ENCODE measurements at regions of chr19 and their contacts with region 1.

Region 1: GRCh38 chr19:10228920-10229319 is 2.2 kb downstream of the S1PR2 start:
- DNase-seq: peak in 1 of 5 donors; percentile 39
- H3K4me3 ChIP-seq: no peak overlapping the region
- H3K27ac ChIP-seq: peak overlapping the region in 1 of 2 donors; percentile 55
- H3K4me1 ChIP-seq: peaks cover 10% of the 10 kb centered on the region
- H3K27me3 ChIP-seq: no peaks in the 10 kb centered on the region
- CTCF ChIP-seq: peak in 2 of 3 donors; percentile 20 to 23
- EP300 ChIP-seq: no peak
- POLR2A ChIP-seq: no peak

Region 2: DNA sequence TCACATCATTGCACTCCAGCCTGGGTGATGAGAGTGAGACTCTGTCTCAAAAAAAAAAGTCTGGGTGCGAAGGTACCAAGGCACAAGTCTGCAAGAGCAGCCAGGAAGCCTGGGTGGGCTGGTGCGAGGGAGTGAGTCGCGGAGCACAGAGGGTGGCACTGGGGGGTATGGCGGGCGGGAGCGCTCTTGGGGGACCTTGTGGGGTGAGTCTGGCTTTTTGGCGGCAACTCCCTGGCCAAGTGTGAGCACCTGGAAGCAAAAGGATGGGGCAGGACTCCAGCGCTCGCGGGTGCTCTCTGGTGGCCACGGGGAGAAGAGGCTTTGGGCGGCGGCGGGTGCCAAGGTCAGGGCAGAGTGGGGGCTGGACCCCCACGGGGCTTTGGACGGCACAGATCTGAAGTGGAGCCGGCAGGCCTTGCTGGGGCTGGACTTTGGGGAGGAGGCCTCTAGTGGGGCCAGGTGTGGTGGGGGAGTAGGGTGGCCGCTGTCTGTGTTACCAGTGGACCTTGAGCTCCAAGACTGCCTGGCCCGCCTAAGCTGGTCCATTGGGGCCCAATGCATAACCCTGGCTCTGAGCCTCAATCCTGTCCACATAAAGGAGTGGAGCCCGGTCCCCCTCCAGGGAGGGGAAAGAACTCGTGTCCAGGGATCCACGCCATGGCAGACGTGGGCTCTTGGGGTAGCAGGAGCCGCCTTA is 115.9 kb before region 1 on chr19:
- intact Hi-C with region 1: loop called in 1 of 4 experiments (anchors 10 kb)
- DNase-seq: peak in 3 of 5 donors; percentile 39 to 79 (median 68)
- H3K4me3 ChIP-seq: no peak overlapping the region
- H3K27ac ChIP-seq: peak overlapping the region in 1 of 2 donors; percentile 16
- H3K4me1 ChIP-seq: no peaks in the 10 kb centered on the region
- H3K27me3 ChIP-seq: no peaks in the 10 kb centered on the region
- CTCF ChIP-seq: peak in 1 of 3 donors; percentile 43
- EP300 ChIP-seq: no peak
- POLR2A ChIP-seq: no peak

Region 3: GRCh38 chr19:10206226-10206885 is 22.6 kb before region 1 on chr19:
- intact Hi-C with region 1: no loop called
- DNase-seq: no peak
- H3K4me3 ChIP-seq: no peak overlapping the region
- H3K27ac ChIP-seq: no peak overlapping the region
- H3K4me1 ChIP-seq: no peaks in the 10 kb centered on the region
- H3K27me3 ChIP-seq: no peaks in the 10 kb centered on the region
- CTCF ChIP-seq: no peak
- EP300 ChIP-seq: no peak
- POLR2A ChIP-seq: no peak

Region 4: DNA sequence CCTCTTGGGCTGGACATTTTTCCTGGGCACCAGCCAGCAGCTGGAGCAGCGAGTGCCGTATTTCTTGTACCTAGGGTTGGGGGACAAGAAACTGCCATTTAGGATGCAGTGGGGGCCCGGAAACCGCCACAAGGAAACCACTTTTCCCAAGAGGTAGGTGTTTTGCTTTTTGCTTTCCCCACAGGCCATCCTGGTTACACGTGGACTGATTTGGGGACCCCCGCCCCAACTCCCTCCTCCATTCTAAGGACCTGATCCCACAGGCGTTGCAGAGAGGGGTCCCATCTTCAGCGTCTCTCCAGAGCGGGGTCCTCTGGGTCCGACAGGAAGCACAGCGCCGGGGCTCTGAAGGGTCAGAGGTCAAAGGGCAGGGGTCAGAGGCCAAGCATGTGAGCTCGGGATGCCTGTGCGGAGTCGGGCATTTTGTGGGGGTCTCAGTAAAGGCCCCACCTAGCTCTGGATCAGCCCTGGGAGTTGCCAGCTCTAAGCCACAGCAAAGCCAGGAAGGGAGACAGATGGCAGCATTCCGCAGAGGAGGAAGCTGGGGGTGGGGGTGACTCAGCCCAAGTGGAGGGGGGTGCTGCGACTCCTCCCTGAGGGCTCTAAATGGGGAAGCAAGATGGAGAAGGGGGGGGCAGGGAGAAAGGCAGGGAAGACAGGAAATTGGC is 76.4 kb after region 1 on chr19:
- intact Hi-C with region 1: no loop called
- DNase-seq: no peak
- H3K4me3 ChIP-seq: no peak overlapping the region
- H3K27ac ChIP-seq: no peak overlapping the region
- H3K4me1 ChIP-seq: no peaks in the 10 kb centered on the region
- H3K27me3 ChIP-seq: no peaks in the 10 kb centered on the region
- CTCF ChIP-seq: no peak
- EP300 ChIP-seq: no peak
- POLR2A ChIP-seq: no peak